GM12878 (cell line): ENCODE measurements at regions of chr12 and their contacts with region 1.

Region 1: DNA sequence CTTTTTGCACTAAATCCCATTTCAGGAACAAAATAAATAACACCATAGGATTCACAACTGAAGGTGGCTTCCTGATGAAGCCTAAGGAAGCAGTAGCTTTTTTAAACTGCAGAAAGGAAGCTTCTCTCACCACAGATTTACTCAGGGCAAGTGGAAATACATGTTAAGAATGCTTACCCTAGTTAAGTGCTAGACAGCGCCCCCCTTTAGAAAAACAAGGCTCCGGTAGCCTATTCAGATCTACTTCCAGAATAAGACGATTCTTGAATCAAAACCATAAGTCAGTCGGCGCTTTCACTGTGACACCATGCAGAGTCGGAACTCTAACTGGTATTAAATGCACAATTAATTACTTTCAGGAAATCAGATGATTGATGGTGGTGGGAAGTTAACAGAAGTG is 41.9 kb downstream of the E2F7 start:
- DNase-seq: no peak
- ATAC-seq: no peak
- H3K4me3 ChIP-seq: no peak overlapping the region
- H3K27ac ChIP-seq: no peak overlapping the region
- H3K4me1 ChIP-seq: no peaks in the 10 kb centered on the region
- H3K27me3 ChIP-seq: no peaks in the 10 kb centered on the region
- CTCF ChIP-seq: no peak
- EP300 ChIP-seq: no peak
- POLR2A ChIP-seq: no peak
- RAD21 ChIP-seq: no peak

Region 2: DNA sequence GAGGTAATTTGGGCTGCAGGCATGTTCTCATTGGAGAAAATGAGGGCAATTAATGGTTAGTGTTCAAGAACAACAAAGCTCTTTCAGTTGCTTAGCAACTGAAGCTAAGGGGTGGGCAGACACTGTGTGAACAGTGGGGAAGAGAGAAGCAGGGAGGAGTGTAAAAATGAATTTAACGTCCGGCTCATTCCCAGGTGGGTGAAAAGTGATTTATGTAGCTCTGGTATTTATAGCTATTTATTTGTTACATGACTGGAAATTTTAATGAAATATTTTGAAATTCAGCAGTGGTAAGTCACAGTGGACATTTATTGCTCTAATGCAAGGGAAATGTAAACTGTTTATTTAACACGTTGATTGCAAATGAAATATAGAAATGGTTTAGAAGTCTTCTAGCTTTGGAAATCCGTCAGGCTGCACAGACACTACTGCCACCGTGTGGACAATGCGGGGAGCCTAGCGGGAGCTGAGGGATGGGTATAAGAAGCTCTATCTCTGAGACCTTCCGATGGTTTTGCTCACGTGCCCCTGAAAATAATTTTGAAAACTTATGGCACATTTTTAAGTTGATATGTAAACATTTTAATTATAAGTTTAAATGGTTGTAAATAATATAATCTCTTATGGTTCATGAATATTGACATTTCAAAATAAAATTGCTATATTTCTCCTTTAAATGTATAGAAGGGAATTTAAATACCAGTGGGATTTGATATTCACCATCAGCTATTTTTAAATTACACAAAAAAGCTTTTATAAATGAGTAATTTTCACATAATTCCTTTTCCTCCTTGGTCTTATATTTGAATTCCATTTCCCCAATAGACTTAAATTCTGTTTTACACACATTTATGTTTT is 12.6 kb before region 1 on chr12:
- CTCF ChIA-PET with region 1: interaction called, 57 read pairs
- POLR2A ChIA-PET with region 1: no interaction called
- RAD21 ChIA-PET with region 1: interaction called, 5 read pairs
- SMC1A ChIA-PET with region 1: interaction called, 11 read pairs
- in situ Hi-C with region 1: no loop called
- intact Hi-C with region 1: no loop called
- DNase-seq: peak; percentile 7
- ATAC-seq: peak; percentile 97
- H3K4me3 ChIP-seq: no peak overlapping the region
- H3K27ac ChIP-seq: no peak overlapping the region
- H3K4me1 ChIP-seq: no peaks in the 10 kb centered on the region
- H3K27me3 ChIP-seq: no peaks in the 10 kb centered on the region
- CTCF ChIP-seq: peak; percentile 85 to 95 (median 94)
- EP300 ChIP-seq: no peak
- POLR2A ChIP-seq: no peak
- RAD21 ChIP-seq: peak; percentile 83